PC-9 (cell line): ENCODE measurements at regions of chr5 and their contacts with region 1.

Region 1: DNA sequence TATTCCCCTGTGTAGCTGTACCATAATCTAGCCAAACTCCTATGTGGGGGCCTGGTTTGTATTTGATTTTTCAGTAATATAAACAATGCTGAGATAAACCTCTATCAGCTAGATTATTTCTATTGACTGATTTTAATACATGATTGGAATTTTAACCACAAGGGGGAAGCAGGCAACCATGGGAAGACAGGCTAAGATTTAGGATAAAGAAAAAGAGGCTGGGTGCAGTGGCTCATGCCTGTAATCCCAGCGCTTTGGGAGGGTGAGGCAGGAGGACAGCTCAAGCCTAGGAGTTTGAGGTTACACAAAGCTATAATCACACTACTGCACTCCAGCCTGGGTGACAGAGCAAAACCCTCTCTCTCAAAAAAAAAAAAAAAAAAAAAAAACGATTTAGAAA is 18.1 kb upstream of the GPX3 start:
- DNase-seq: peak in 1 of 2 experiments; percentile 39
- H3K4me3 ChIP-seq: no peak overlapping the region
- H3K27ac ChIP-seq: no peak overlapping the region
- H3K4me1 ChIP-seq: no peaks in the 10 kb centered on the region
- H3K27me3 ChIP-seq: no peaks in the 10 kb centered on the region
- CTCF ChIP-seq: peak; percentile 69

Region 2: GRCh38 chr5:151051066-151051930 is 49.0 kb after region 1 on chr5:
- CTCF ChIA-PET with region 1: interaction called, 5 read pairs
- POLR2A ChIA-PET with region 1: no interaction called
- intact Hi-C with region 1: loop called (anchors 2 kb)
- DNase-seq: peak; percentile 59 to 65
- H3K4me3 ChIP-seq: no peak overlapping the region
- H3K27ac ChIP-seq: no peak overlapping the region
- H3K4me1 ChIP-seq: peaks cover 25% of the 10 kb centered on the region
- H3K27me3 ChIP-seq: no peaks in the 10 kb centered on the region
- CTCF ChIP-seq: peak; percentile 92

Region 3: GRCh38 chr5:151115274-151115905 is 113.1 kb after region 1 on chr5:
- CTCF ChIA-PET with region 1: interaction called, 8 read pairs
- POLR2A ChIA-PET with region 1: no interaction called
- intact Hi-C with region 1: loop called (anchors 1 kb)
- DNase-seq: peak; percentile 50 to 76
- H3K4me3 ChIP-seq: no peak overlapping the region
- H3K27ac ChIP-seq: no peak overlapping the region
- H3K4me1 ChIP-seq: no peaks in the 10 kb centered on the region; the same call in 1 of the 2 replicates
- H3K27me3 ChIP-seq: no peaks in the 10 kb centered on the region
- CTCF ChIP-seq: peak; percentile 99

Region 4: GRCh38 chr5:151239237-151239861 is 237.1 kb after region 1 on chr5:
- CTCF ChIA-PET with region 1: interaction called, 6 read pairs
- POLR2A ChIA-PET with region 1: no interaction called
- intact Hi-C with region 1: loop called (anchors 10 kb)
- DNase-seq: peak in 1 of 2 experiments; percentile 63
- H3K4me3 ChIP-seq: no peak overlapping the region
- H3K27ac ChIP-seq: no peak overlapping the region
- H3K4me1 ChIP-seq: peaks cover 8% of the 10 kb centered on the region
- H3K27me3 ChIP-seq: 0 out of 2 replicates have a peak, but pooled peaks cover 4% of the 10 kb centered on the region
- CTCF ChIP-seq: peak; percentile 88

Region 5: DNA sequence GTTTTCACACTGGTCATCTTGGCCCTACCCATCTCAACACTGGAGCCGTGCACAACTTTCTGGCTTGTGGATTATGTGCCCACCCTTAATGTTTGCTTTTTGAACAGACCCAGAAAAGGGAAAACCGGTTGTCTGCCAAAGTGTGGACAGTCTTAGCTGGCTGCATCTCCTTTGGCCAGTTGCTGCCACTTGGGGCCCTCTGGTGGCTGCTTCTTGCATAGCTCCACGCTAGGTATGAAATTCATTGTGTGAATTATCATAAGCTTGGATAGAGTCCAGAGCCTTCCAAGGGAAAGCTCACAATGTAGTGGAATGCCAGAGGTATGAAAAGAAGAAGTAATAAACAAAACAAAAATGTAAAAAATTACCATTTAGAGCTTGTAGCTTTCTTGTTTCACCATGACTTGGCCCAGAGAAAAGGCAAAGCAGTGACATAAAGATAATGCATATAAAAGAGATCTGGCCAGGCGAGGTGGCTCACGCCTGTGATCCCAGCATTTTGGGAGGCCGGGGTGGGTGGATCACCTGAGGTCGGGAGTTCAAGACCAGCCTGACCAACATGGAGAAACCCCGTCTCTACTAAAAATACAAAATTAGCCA is 313.8 kb after region 1 on chr5:
- CTCF ChIA-PET with region 1: interaction called, 12 read pairs
- POLR2A ChIA-PET with region 1: no interaction called
- intact Hi-C with region 1: loop called (anchors 5 kb)
- DNase-seq: peak; percentile 55 to 78
- H3K4me3 ChIP-seq: no peak overlapping the region
- H3K27ac ChIP-seq: no peak overlapping the region
- H3K4me1 ChIP-seq: no peaks in the 10 kb centered on the region
- H3K27me3 ChIP-seq: peaks cover 7% of the 10 kb centered on the region; the same call in 1 of the 2 replicates
- CTCF ChIP-seq: peak; percentile 91

Region 6: GRCh38 chr5:151499501-151500035 is 497.3 kb after region 1 on chr5:
- CTCF ChIA-PET with region 1: no interaction called
- POLR2A ChIA-PET with region 1: no interaction called
- intact Hi-C with region 1: loop called (anchors 1 kb)
- DNase-seq: no peak
- H3K4me3 ChIP-seq: no peak overlapping the region
- H3K27ac ChIP-seq: no peak overlapping the region
- H3K4me1 ChIP-seq: no peaks in the 10 kb centered on the region
- H3K27me3 ChIP-seq: no peaks in the 10 kb centered on the region
- CTCF ChIP-seq: no peak

Region 7: DNA sequence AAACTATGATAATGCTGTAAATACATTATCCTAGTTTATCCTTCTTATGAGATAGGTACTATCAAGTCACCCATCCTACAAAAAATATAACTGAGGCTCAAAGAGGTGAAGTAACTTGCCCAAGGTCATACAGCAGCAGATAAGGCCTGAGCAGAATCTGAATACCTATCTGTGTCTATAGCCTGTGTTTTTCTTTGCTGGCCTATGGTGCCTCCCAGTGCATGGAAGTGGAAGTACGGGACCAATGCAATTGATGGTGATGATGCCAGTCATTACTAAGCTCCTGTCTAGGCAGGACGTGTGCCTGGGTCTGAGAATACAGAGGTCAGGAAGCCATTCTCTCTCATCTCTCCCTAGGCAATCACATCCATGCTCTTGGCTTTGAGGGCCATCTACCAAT is 521.1 kb after region 1 on chr5:
- CTCF ChIA-PET with region 1: interaction called, 10 read pairs
- POLR2A ChIA-PET with region 1: no interaction called
- intact Hi-C with region 1: no loop called
- DNase-seq: peak in 1 of 2 experiments; percentile 41
- H3K4me3 ChIP-seq: no peak overlapping the region
- H3K27ac ChIP-seq: no peak overlapping the region
- H3K4me1 ChIP-seq: peaks cover 5% of the 10 kb centered on the region; the same call in 1 of the 2 replicates
- H3K27me3 ChIP-seq: no peaks in the 10 kb centered on the region
- CTCF ChIP-seq: peak; percentile 76